CD14-positive monocyte (primary cell): ENCODE measurements at regions of chr5 and their contacts with region 1.

Region 1: GRCh38 chr5:99060306-99061261 is 131.8 kb upstream of the CHD1 start:
- DNase-seq: peak; percentile 60 to 73 (median 67)
- H3K4me3 ChIP-seq: no peak overlapping the region
- H3K4me3 Mint-ChIP-seq: no peak overlapping the region
- H3K27ac ChIP-seq: no peak overlapping the region
- H3K27ac Mint-ChIP-seq: no peak overlapping the region
- H3K4me1 ChIP-seq: peaks cover 13% of the 10 kb centered on the region in 2 donors
- H3K4me1 Mint-ChIP-seq: peaks cover 17% of the 10 kb centered on the region
- H3K27me3 ChIP-seq: no peaks in the 10 kb centered on the region
- H3K27me3 Mint-ChIP-seq: peaks cover 0 to 2% (median 0%) of the 10 kb centered on the region in 3 donors
- CTCF ChIP-seq: peak; percentile 95

Region 2: GRCh38 chr5:98905857-98906690 is 154.5 kb before region 1 on chr5:
- intact Hi-C with region 1: loop called (anchors 2 to 5 kb)
- DNase-seq: peak; percentile 25 to 58 (median 35)
- H3K4me3 ChIP-seq: no peak overlapping the region
- H3K4me3 Mint-ChIP-seq: no peak overlapping the region
- H3K27ac ChIP-seq: no peak overlapping the region
- H3K27ac Mint-ChIP-seq: peak overlapping the region in 1 of 7 donors; percentile 11
- H3K4me1 ChIP-seq: peaks cover 9 to 17% of the 10 kb centered on the region in 2 donors
- H3K4me1 Mint-ChIP-seq: peaks cover 21% of the 10 kb centered on the region
- H3K27me3 ChIP-seq: no peaks in the 10 kb centered on the region
- H3K27me3 Mint-ChIP-seq: no peaks in the 10 kb centered on the region
- CTCF ChIP-seq: peak; percentile 91